Kidney (tissue), 22 donors: ENCODE measurements at regions of chr12 and their contacts with region 1.

Region 1: GRCh38 chr12:49644620-49644994 is 21.2 kb downstream of the PRPF40B start:
- DNase-seq: peak; percentile 86 to 93 (median 89)
- H3K4me3 ChIP-seq: no peak overlapping the region
- H3K27ac ChIP-seq: no peak overlapping the region
- H3K4me1 ChIP-seq: peaks cover 2 to 23% (median 3%) of the 10 kb centered on the region in 3 donors
- H3K27me3 ChIP-seq: no peaks in the 10 kb centered on the region
- CTCF ChIP-seq: peak; percentile 92

Region 2: DNA sequence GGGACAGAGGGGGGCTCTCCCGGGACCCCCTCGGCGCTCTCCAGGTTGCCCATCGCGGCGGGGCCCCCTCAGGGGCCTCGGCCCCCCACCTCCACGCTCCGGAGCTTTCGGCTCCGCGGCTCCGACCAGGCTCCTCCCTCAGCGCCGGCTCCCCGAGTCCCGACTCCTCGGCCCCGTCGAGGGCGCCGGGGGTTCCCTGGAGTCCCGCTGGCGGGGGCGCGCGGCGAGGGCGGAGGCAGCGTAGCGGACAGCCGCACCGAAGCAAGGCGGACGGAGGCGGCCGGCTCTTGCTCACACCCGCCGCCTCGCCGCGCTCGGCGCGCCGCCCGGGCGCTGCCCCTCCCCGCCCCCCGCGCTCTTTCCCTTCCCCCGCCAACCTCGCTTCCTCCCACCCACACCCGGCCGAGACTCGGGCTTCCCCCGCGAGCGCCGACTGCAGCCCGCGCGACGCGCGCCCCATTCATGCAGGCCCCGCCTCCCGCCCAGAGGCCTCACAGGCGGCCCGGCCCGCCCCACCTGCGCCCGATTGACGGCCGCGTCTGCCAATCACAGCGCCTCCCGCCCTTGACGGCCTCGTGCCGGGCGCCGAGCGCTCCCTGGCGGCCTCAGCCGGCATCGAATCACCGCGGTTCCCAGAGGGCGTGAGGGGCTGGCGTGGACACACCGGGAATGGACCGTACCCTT is 62.7 kb after region 1 on chr12 and contains the start of gene FMNL3:
- intact Hi-C with region 1: loop called (anchors 5 kb)
- DNase-seq: peak; percentile 96 to 99 (median 98)
- H3K4me3 ChIP-seq: peak within 1 kb of the TSS; percentile 55 to 71 (median 59)
- H3K27ac ChIP-seq: peak within 1 kb of the TSS; percentile 81 to 85
- H3K4me1 ChIP-seq: peaks cover 0 to 9% (median 0%) of the 10 kb centered on the region in 3 donors
- H3K27me3 ChIP-seq: no peaks in the 10 kb centered on the region
- CTCF ChIP-seq: peak; percentile 98
- total RNA-seq, gene FMNL3: 25.6 TPM